HEK293 (cell line): ENCODE measurements at regions of chr18 and their contacts with region 1.

Region 1: GRCh38 chr18:74819433-74820059 is 221.9 kb downstream of the ZNF407 start:
- H3K4me3 ChIP-seq: no peak overlapping the region
- H3K27ac ChIP-seq: no peak overlapping the region
- H3K4me1 ChIP-seq: no peaks in the 10 kb centered on the region
- CTCF ChIP-seq: no peak

Region 2: DNA sequence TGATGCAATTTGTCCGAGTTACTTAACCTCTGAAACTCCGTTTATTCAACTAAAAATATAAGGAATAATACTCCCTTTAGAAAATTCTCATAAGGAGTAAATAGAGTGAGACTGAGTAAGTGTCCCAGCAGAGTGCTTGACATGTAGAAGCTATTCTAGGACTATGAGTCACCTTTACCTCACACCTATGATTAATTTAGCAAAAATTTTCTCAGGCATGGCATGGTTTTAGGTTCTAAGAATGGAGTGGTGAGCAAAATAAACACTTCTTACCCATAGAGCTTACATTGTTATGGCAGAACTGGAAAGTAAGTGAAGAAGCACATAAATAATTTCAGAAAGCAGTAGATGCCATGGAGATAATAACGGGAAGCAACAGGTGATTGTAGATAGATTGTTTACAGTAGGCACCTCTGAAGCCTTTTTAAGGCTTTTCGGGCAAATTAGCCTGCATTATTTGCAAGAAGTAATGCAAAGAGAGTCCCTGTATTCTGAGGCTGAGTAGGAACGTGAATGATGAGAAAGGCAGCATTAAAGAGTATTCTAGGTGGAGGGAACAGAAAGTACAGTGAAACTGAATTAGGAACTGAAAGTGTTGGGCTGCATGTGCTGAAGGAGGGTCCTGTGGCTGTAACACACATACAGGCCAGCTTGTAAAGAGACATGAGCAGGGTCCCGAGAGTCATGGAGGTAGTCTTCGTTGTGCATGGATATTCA is 12.7 kb before region 1 on chr18:
- CTCF ChIA-PET with region 1: interaction called, 18 read pairs
- POLR2A ChIA-PET with region 1: no interaction called
- H3K4me3 ChIP-seq: no peak overlapping the region
- H3K27ac ChIP-seq: no peak overlapping the region
- H3K4me1 ChIP-seq: peaks cover 23% of the 10 kb centered on the region
- CTCF ChIP-seq: no peak

Region 3: GRCh38 chr18:74834424-74835296 is 15.1 kb after region 1 on chr18:
- CTCF ChIA-PET with region 1: interaction called, 12 read pairs
- POLR2A ChIA-PET with region 1: no interaction called
- H3K4me3 ChIP-seq: no peak overlapping the region
- H3K27ac ChIP-seq: no peak overlapping the region
- H3K4me1 ChIP-seq: peaks cover 6% of the 10 kb centered on the region; the same call in 1 of the 2 replicates
- CTCF ChIP-seq: no peak

Region 4: DNA sequence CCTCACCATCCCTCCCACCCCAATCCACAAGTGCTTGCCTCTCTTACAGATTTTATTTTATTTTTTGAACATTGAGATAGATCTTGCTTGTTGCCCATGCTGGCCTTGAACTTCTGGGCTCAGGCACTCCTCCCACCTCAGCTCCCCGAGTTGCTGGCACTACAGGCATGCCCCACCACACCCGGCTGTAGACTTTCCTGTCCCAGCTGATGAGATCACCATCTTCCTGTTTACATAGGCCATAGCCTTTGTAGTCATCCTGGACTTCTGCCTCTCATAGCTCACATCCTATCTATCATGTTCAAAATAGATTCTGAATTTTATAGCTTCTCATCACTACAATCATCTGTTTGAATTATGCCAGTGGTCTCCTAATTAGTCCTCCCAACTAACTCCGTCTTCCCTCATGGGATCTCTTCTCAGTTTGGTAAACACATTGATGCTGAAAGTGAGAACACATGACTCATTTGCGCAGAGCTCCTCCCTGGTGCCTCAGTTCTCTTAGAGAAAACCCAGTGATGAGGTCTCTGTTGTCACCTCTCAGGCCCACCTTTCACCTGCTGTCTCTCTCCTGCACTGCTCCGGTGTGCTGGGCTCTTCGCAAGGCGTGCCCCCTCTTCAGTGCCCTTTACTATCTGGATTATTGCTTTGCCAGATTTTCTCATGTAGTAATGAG is 21.1 kb after region 1 on chr18:
- CTCF ChIA-PET with region 1: interaction called, 12 read pairs
- POLR2A ChIA-PET with region 1: no interaction called
- H3K4me3 ChIP-seq: no peak overlapping the region
- H3K27ac ChIP-seq: no peak overlapping the region
- H3K4me1 ChIP-seq: peaks cover 6% of the 10 kb centered on the region; the same call in 1 of the 2 replicates
- CTCF ChIP-seq: no peak